Activated CD8-positive, alpha-beta T cell treated with anti-CD3 and anti-CD28 coated beads, Interleukin-2, amount 10 ng/mL, durations not matched to agents 7 days and 5 days (primary cell): ENCODE measurements at regions of chr6 and their contacts with region 1.

Region 1: GRCh38 chr6:14046476-14047068 is 71.0 kb upstream of the CD83 start:
- DNase-seq: peak; percentile 59
- ATAC-seq: peak; percentile 65
- H3K4me3 Mint-ChIP-seq: no peak overlapping the region
- H3K27ac Mint-ChIP-seq: no peak overlapping the region
- H3K4me1 Mint-ChIP-seq: no peaks in the 10 kb centered on the region
- H3K27me3 Mint-ChIP-seq: peaks cover 33% of the 10 kb centered on the region

Region 2: DNA sequence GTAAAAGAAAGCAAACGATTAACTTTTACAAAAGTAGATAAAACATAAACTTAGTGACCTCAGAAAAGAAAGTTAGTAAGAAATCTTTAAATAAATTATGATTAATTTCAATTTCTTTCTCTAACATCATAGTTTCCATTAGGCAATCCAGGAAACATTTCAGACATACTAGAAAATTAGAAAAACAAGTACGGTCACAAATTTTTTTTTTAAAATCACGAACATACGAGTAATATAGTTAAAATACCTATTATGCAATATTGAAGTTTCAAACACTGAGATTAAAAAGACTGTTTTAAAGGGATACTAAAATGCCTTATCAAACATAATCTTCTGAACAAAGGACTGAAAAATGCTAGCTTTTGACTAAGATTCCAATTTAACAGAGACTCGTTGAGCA is 405.3 kb before region 1 on chr6:
- CTCF ChIA-PET with region 1: no interaction called
- POLR2A ChIA-PET with region 1: no interaction called
- DNase-seq: no peak
- ATAC-seq: no peak
- H3K4me3 Mint-ChIP-seq: no peak overlapping the region
- H3K27ac Mint-ChIP-seq: no peak overlapping the region
- H3K4me1 Mint-ChIP-seq: peaks cover 17% of the 10 kb centered on the region
- H3K27me3 Mint-ChIP-seq: no peaks in the 10 kb centered on the region

Region 3: GRCh38 chr6:13873285-13874190 is 173.0 kb before region 1 on chr6:
- CTCF ChIA-PET with region 1: interaction called, 14 read pairs
- POLR2A ChIA-PET with region 1: no interaction called
- DNase-seq: peak; percentile 79
- ATAC-seq: peak; percentile 98
- H3K4me3 Mint-ChIP-seq: peak overlapping the region; percentile 63
- H3K27ac Mint-ChIP-seq: peak overlapping the region; percentile 10
- H3K4me1 Mint-ChIP-seq: peaks cover 10% of the 10 kb centered on the region
- H3K27me3 Mint-ChIP-seq: peaks cover 8% of the 10 kb centered on the region

Region 4: GRCh38 chr6:13908955-13909381 is 137.6 kb before region 1 on chr6:
- CTCF ChIA-PET with region 1: interaction called, 30 read pairs
- POLR2A ChIA-PET with region 1: no interaction called
- DNase-seq: peak; percentile 58
- ATAC-seq: peak; percentile 79
- H3K4me3 Mint-ChIP-seq: no peak overlapping the region
- H3K27ac Mint-ChIP-seq: no peak overlapping the region
- H3K4me1 Mint-ChIP-seq: peaks cover 1% of the 10 kb centered on the region
- H3K27me3 Mint-ChIP-seq: peaks cover 44% of the 10 kb centered on the region

Region 5: DNA sequence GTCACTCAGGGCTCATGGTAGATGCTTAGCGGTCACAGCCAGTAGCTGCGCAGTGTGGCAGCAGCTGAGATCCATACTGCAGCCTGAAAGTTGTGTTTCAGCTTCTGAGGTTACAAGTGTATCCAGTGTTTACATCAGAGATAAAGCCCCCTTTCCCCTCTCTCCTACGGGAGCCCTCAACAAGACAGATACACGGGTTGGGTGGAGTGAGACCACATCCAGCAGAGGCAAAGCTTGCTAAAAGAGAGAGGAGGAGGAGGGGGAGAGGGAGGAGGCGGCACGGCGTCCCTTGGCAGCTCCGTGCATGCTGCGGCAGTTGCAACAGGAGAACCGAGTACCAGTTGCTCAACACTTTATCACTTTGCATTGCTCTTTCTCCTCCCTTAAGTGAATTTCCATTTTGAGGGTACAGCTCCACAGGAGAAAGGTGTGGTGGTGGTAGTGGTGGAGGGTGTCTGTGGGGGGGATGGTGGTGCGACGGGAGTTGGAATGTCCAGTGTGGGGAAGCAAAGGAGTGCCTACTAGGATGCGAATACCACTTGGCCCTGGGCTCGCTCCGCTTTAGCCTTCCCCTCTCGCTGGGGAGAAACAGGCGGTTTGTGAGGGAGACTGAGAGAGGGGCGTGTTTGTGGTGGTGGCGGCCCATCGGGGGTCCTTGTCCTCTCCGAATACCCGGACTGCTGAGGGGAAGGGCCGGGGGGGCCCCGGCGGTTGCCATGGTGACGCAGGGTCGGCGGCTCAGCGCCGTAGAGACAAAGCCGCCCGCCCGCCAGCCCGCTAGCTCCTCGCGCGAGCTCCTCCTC is 122.2 kb before region 1 on chr6:
- CTCF ChIA-PET with region 1: interaction called, 12 read pairs
- POLR2A ChIA-PET with region 1: no interaction called
- DNase-seq: peak; percentile 50
- ATAC-seq: peak; percentile 57
- H3K4me3 Mint-ChIP-seq: peak overlapping the region; percentile 61
- H3K27ac Mint-ChIP-seq: no peak overlapping the region
- H3K4me1 Mint-ChIP-seq: peaks cover 14% of the 10 kb centered on the region
- H3K27me3 Mint-ChIP-seq: peaks cover 58% of the 10 kb centered on the region

Region 6: DNA sequence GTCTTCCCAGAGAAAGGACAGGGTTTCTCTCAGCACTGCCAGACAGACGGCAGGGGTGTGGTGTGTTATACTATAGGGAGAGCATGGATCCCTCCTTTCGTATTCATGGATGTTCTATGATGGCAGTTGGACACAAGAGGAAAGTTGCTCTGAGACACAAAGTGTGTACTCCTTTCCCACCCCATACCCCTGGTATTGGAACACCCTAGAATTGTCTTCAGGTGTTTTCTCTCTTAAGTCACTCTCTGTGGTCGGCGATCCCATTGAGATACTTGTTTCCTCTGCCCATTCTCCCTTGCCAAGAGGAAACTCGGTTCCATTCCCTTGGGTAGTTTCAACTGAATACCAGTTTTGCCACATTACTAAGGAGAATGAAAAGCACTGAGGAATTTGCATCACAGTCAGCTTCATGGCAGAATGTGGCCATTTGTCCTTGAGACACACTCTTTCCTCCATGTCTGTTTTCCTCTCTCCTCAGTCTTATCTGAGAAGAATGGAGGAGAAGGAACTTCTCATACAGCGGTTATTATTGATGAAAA is 68.4 kb before region 1 on chr6:
- CTCF ChIA-PET with region 1: no interaction called
- POLR2A ChIA-PET with region 1: no interaction called
- DNase-seq: no peak
- ATAC-seq: no peak
- H3K4me3 Mint-ChIP-seq: no peak overlapping the region
- H3K27ac Mint-ChIP-seq: no peak overlapping the region
- H3K4me1 Mint-ChIP-seq: no peaks in the 10 kb centered on the region
- H3K27me3 Mint-ChIP-seq: peaks cover 28% of the 10 kb centered on the region

Region 7: GRCh38 chr6:14129575-14129974 is 83.0 kb after region 1 on chr6:
- CTCF ChIA-PET with region 1: interaction called, 10 read pairs
- POLR2A ChIA-PET with region 1: no interaction called
- DNase-seq: peak; percentile 66
- ATAC-seq: peak; percentile 72
- H3K4me3 Mint-ChIP-seq: no peak overlapping the region
- H3K27ac Mint-ChIP-seq: no peak overlapping the region
- H3K4me1 Mint-ChIP-seq: peaks cover 18% of the 10 kb centered on the region
- H3K27me3 Mint-ChIP-seq: no peaks in the 10 kb centered on the region

Region 8: GRCh38 chr6:14144678-14145113 is 98.1 kb after region 1 on chr6:
- CTCF ChIA-PET with region 1: interaction called, 13 read pairs
- POLR2A ChIA-PET with region 1: no interaction called
- DNase-seq: peak; percentile 79
- ATAC-seq: peak; percentile 88
- H3K4me3 Mint-ChIP-seq: no peak overlapping the region
- H3K27ac Mint-ChIP-seq: no peak overlapping the region
- H3K4me1 Mint-ChIP-seq: peaks cover 6% of the 10 kb centered on the region
- H3K27me3 Mint-ChIP-seq: no peaks in the 10 kb centered on the region